ENCODE measurements at regions of chr10 and their contacts with region 1.

Region 1: GRCh38 chr10:36899651-36900050 is 225.7 kb upstream of the ANKRD30A start:
- ATAC-seq: peak in 1 of 8 experiments; percentile 41
- H3K4me3 ChIP-seq: no peak overlapping the region
- H3K27ac ChIP-seq: no peak overlapping the region
- H3K4me1 ChIP-seq: no peaks in the 10 kb centered on the region

Region 2: GRCh38 chr10:36559412-36560400 is 339.9 kb before region 1 on chr10:
- in situ Hi-C with region 1: no loop called
- ATAC-seq: no peak
- H3K4me3 ChIP-seq: no peak overlapping the region
- H3K27ac ChIP-seq: no peak overlapping the region
- H3K4me1 ChIP-seq: no peaks in the 10 kb centered on the region

Region 3: DNA sequence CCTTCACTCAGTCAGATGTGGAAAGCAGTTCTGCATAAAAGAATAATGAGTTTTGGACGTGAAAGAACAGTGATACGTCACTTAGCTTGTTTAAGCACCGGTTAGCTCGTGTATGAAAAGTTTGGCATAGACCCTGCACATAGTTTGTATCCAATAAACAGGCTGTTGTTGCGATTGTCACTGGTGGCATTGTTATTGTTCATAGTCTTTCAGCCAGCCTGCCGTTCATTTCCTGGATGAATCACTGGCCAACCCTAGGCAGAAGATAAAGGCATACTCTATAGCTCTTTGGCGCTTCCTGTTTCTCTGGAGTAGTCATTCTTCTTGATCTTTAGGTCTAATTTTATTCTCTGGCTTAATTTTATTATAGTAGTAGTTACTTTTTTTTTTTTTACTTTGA is 167.9 kb after region 1 on chr10:
- in situ Hi-C with region 1: loop called in 1 of 9 experiments (anchors 25 kb)
- ATAC-seq: no peak
- H3K4me3 ChIP-seq: no peak overlapping the region
- H3K27ac ChIP-seq: no peak overlapping the region
- H3K4me1 ChIP-seq: no peaks in the 10 kb centered on the region

Region 4: DNA sequence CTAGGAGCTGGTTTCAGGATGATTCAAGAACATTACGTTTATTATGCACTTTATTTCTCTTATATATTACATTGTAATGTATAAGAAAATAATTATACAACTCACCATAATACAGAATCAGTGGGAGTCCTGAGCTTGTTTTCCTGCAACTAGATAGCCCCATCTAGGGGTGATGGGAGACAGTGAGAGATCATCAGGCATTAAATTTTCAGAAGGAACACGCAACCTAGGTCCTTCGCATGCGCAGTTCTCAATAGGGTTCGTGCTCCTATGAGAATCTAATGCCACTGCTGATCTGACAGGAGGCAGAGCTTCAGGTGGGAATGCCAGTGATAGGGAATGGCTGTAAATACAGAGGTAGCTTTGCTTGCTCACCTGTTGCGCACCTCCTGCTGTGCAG is 363.7 kb after region 1 on chr10:
- in situ Hi-C with region 1: loop called in 1 of 9 experiments (anchors 25 kb)
- ATAC-seq: peak in 1 of 8 experiments; percentile 38
- H3K4me3 ChIP-seq: no peak overlapping the region
- H3K27ac ChIP-seq: no peak overlapping the region
- H3K4me1 ChIP-seq: no peaks in the 10 kb centered on the region

Measured in motor neuron (in vitro differentiated cells).